HepG2 (cell line): ENCODE measurements at regions of chr1 and their contacts with region 1.

Region 1: GRCh38 chr1:248622570-248623001 is 12.3 kb downstream of the OR2T11 start:
- DNase-seq: peak; percentile 44
- ATAC-seq: peak; percentile 86
- H3K4me3 ChIP-seq: no peak overlapping the region
- H3K27ac ChIP-seq: no peak overlapping the region
- H3K4me1 ChIP-seq: no peaks in the 10 kb centered on the region
- H3K27me3 ChIP-seq: no peaks in the 10 kb centered on the region; a peak in 1 of 5 replicates
- CTCF ChIP-seq: peak; percentile 71
- EP300 ChIP-seq: no peak
- POLR2A ChIP-seq: no peak
- RAD21 ChIP-seq: no peak

Region 2: DNA sequence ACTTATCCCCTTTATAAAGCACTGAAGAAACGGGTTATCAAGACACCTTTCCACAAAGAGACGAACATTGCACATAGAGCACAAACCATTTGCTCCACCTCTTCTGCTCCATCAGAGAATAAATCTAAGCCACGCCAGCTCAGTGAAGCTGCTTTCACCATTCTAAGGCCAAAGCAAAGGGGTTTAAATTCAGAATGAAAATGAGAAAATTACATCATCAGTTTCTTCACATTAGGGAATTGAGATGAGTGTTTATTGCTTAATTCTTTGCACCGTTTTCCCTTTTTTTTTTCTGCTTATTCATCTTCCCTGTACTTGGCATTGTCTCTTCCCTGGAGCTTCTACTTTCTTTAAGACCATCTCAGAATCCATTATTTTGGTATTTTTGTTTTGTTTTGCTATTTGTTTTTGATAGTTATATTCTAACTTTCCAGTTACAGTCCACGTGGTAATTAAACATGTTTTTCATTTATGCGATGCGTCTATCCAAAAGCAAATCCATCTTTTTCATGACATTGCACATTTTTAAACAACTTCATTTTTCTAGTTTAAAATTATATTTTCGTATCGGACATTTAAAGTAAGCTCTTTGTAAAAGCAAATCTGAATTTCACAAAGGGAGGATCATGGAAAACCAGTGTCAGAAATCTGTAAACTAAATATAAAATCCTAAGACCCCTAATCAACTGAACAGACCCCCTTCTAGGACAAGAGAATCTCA is 46.2 kb before region 1 on chr1:
- CTCF ChIA-PET with region 1: no interaction called
- POLR2A ChIA-PET with region 1: no interaction called
- in situ Hi-C with region 1: no loop called
- intact Hi-C with region 1: no loop called
- DNase-seq: no peak
- ATAC-seq: no peak
- H3K4me3 ChIP-seq: no peak overlapping the region
- H3K27ac ChIP-seq: no peak overlapping the region
- H3K4me1 ChIP-seq: no peaks in the 10 kb centered on the region
- H3K27me3 ChIP-seq: no peaks in the 10 kb centered on the region
- CTCF ChIP-seq: no peak
- EP300 ChIP-seq: no peak
- POLR2A ChIP-seq: no peak
- RAD21 ChIP-seq: no peak

Region 3: GRCh38 chr1:248686815-248687214 is 64.2 kb after region 1 on chr1:
- CTCF ChIA-PET with region 1: interaction called, 11 read pairs
- POLR2A ChIA-PET with region 1: no interaction called
- in situ Hi-C with region 1: loop called (anchors 10 kb)
- intact Hi-C with region 1: loop called (anchors 1 kb)
- DNase-seq: no peak
- ATAC-seq: peak; percentile 90
- H3K4me3 ChIP-seq: no peak overlapping the region
- H3K27ac ChIP-seq: no peak overlapping the region
- H3K4me1 ChIP-seq: no peaks in the 10 kb centered on the region
- H3K27me3 ChIP-seq: no peaks in the 10 kb centered on the region
- CTCF ChIP-seq: peak; percentile 40
- EP300 ChIP-seq: no peak
- POLR2A ChIP-seq: no peak
- RAD21 ChIP-seq: 0 out of 2 replicates have a peak, but pooled peaks have one; percentile 20

Region 4: DNA sequence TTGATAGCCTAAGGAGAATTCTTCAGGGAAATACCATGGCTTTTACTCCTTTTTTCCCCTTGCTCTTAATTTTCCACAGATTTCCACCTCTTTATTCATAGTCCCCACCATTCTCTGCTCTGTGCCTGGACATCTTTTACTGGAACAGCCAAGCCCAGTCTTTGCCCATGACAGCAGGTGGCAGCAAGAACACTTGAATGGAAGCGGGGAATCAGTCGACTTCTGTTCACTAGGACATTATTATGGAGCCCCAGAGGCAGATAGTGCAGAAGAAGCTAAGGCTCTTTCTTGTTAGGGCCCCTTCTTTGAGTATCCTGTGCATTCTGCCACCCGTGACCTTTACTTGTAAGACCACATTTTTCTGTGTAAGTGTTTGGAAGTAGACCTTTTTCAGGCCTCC is 73.7 kb after region 1 on chr1:
- CTCF ChIA-PET with region 1: interaction called, 3 read pairs
- POLR2A ChIA-PET with region 1: no interaction called
- in situ Hi-C with region 1: loop called (anchors 10 kb)
- intact Hi-C with region 1: no loop called
- DNase-seq: peak; percentile 63
- ATAC-seq: peak; percentile 98
- H3K4me3 ChIP-seq: no peak overlapping the region
- H3K27ac ChIP-seq: no peak overlapping the region
- H3K4me1 ChIP-seq: no peaks in the 10 kb centered on the region
- H3K27me3 ChIP-seq: no peaks in the 10 kb centered on the region
- CTCF ChIP-seq: peak; percentile 79
- EP300 ChIP-seq: no peak
- POLR2A ChIP-seq: no peak
- RAD21 ChIP-seq: peak; percentile 65